Adrenal gland (tissue), 19 donors: ENCODE measurements at regions of chr6 and their contacts with region 1.

Region 1: DNA sequence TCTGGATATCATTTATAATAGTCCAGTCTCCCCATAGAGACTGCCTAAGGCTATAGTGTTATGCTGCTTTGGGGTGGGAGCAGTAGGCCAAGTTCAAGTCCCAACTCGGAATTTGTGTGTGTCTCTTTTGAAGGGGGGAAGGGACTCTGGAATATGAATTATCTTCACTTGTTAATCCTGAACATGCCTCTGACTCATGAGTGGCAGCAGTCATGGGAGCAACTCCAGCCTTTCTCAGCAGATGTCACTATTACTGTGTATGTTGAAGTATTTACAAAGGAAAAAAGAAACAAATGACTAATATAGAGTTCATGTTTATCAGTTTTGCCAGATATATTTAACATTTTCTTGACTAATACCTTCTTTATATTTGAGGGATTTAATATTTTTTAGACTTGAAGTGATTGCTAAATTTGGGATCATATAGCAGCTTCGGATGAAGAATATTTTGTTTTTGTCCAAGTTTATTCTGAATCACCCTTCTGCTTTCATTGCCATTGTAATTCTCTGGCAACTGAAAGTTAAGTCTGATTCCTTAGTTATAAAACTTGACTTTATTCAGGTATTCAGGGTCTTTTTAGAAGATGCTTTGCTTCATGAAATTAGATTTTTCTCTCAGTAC is 23.4 kb downstream of the FAM217A start:
- DNase-seq: peak in 6 of 7 donors; percentile 41 to 78 (median 66)
- H3K4me3 ChIP-seq: no peak overlapping the region
- H3K27ac ChIP-seq: peak overlapping the region in 2 of 5 donors; percentile 33 to 52
- H3K4me1 ChIP-seq: peaks cover 0 to 12% of the 10 kb centered on the region in 2 donors
- H3K27me3 ChIP-seq: no peaks in the 10 kb centered on the region
- CTCF ChIP-seq: peak in 4 of 6 experiments; percentile 32 to 47 (median 38)
- POLR2A ChIP-seq: no peak

Region 2: DNA sequence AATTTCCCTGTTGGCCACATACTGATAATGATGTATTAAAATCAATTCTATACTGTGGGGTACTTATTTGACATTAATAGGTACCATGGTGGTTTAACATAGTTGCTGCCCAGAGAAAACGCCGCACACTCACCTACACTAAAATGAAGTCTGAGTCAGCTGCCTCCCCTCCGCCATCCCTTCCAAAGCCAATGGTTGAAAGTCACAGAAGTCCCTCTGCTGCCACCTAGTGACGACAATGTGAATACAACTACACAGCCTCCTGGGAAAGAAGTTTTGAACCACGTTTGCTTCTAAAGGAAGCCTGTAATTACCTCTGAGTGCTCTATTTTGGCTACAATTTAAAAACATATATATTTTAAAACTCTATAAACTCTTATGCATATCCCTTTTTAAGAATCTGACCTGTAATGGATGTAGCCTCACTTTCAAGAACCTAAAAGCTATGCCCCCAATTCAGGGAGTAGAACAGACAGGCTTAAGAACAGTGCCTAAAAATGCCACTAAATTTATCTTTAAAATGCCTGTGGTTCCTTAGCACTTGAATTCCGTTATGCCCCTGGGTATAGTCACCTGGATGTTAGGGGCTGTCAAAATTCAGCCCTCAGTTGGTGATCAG is 100.4 kb after region 1 on chr6:
- intact Hi-C with region 1: loop called (anchors 10 kb)
- DNase-seq: peak; percentile 82 to 94 (median 85)
- H3K4me3 ChIP-seq: no peak overlapping the region
- H3K27ac ChIP-seq: no peak overlapping the region
- H3K4me1 ChIP-seq: peaks cover 0 to 4% of the 10 kb centered on the region in 2 donors
- H3K27me3 ChIP-seq: no peaks in the 10 kb centered on the region
- CTCF ChIP-seq: peak; percentile 78 to 87 (median 84)
- POLR2A ChIP-seq: no peak

Region 3: GRCh38 chr6:4196359-4196758 is 140.8 kb after region 1 on chr6:
- intact Hi-C with region 1: no loop called
- DNase-seq: no peak
- H3K4me3 ChIP-seq: no peak overlapping the region
- H3K27ac ChIP-seq: no peak overlapping the region
- H3K4me1 ChIP-seq: no peaks in the 10 kb centered on the region
- H3K27me3 ChIP-seq: no peaks in the 10 kb centered on the region
- CTCF ChIP-seq: no peak
- POLR2A ChIP-seq: no peak